PC-3 (cell line): ENCODE measurements at regions of chr17 and their contacts with region 1.

Region 1: GRCh38 chr17:75855310-75856081 is at the start of gene WBP2:
- DNase-seq: peak; percentile 100
- ATAC-seq: peak; percentile 90
- H3K4me3 ChIP-seq: peak within 1 kb of the TSS; percentile 86
- H3K27ac ChIP-seq: peak within 1 kb of the TSS; percentile 69
- H3K4me1 ChIP-seq: peaks cover 28% of the 10 kb centered on the region
- H3K27me3 ChIP-seq: no peaks in the 10 kb centered on the region
- CTCF ChIP-seq: peak; percentile 51
- total RNA-seq, gene WBP2: 49.7 and 51.8 TPM in 2 replicates

Region 2: DNA sequence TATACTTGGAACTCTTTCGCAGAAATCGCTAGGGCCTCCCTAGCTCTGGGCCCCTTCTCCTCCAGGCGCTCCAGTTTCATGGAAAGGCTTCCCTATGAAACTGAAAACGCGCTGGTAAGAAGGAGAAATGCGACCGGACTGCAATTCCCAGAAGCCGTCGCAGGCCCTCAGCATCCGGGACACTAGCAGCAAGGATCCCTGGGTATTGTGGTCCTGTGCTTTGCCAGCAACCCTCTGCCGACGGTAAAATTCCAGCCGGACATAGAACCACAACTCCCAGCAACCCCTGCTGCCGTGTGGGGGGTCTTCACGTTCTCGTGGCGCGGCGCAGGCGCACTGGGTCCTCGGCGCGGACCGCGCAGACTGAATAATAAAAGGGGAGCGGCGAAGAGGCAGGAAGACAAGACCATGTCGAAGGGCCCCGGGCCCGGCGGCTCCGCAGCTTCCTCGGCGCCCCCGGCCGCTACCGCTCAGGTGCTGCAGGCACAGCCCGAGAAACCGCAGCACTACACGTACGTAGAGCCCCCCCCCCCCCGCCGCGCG is 71.0 kb before region 1 on chr17 and contains the start of gene UNK:
- CTCF ChIA-PET with region 1: interaction called, 5 read pairs
- POLR2A ChIA-PET with region 1: interaction called, 16 read pairs
- intact Hi-C with region 1: loop called (anchors 2 kb)
- DNase-seq: peak; percentile 99
- ATAC-seq: peak; percentile 71
- H3K4me3 ChIP-seq: peak within 1 kb of the TSS; percentile 68
- H3K27ac ChIP-seq: peak within 1 kb of the TSS; percentile 93
- H3K4me1 ChIP-seq: peaks cover 49% of the 10 kb centered on the region
- H3K27me3 ChIP-seq: no peaks in the 10 kb centered on the region
- CTCF ChIP-seq: no peak
- total RNA-seq, gene UNK: 21.8 and 22.9 TPM in 2 replicates

Region 3: GRCh38 chr17:75799398-75799797 is 56.1 kb before region 1 on chr17:
- CTCF ChIA-PET with region 1: no interaction called
- POLR2A ChIA-PET with region 1: no interaction called
- intact Hi-C with region 1: no loop called
- DNase-seq: no peak
- ATAC-seq: no peak
- H3K4me3 ChIP-seq: no peak overlapping the region
- H3K27ac ChIP-seq: no peak overlapping the region
- H3K4me1 ChIP-seq: no peaks in the 10 kb centered on the region
- H3K27me3 ChIP-seq: no peaks in the 10 kb centered on the region
- CTCF ChIP-seq: no peak

Region 4: DNA sequence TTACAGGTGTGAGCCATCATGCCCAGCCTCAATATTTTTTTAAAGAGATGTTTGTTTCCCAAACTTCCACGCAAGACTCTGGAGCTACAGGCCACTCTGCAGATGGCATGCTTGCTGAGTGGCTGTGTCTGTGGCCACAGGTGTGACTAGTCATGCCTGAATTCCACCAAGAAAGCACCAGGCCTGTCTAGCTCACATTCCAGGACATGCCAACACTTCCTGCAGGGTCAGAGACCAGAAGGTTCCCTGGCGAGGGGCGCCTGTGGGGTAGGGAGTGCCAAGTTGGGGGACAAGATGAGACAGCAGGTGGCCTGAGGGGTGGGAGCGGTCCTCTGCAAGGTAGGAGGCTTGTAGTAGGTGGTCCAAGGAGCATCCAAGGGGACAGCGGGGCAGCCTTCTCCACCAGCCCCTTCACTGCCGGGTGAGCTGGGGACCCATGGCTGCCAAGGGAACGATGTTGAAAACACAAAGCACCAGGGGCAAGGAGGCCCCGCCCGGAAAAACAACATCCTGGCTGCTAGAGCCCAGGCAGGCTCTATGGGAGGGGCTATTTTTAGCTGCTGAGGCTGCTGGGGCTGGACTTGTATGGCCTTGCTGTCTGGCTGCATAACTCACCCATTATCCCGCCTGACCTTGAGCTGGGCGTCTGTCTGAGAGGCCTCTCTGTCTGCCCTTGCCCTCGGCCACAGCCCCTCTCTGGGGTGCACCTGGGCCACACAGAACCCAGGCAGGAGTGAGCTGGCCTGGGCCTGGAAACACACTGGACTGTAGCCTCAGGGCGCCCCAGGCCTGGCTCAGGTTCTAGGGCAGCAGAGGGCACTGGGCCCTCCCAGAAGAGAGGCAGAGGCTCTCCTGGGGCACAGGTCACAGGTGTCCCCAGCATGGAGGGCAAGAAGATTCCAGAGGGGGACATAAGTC is 17.2 kb after region 1 on chr17:
- CTCF ChIA-PET with region 1: interaction called, 30 read pairs
- POLR2A ChIA-PET with region 1: interaction called, 29 read pairs
- intact Hi-C with region 1: loop called (anchors 1 kb)
- DNase-seq: peak; percentile 80
- ATAC-seq: peak; percentile 16
- H3K4me3 ChIP-seq: no peak overlapping the region
- H3K27ac ChIP-seq: peak overlapping the region; percentile 62
- H3K4me1 ChIP-seq: peaks cover 36% of the 10 kb centered on the region
- H3K27me3 ChIP-seq: no peaks in the 10 kb centered on the region
- CTCF ChIP-seq: no peak

Region 5: DNA sequence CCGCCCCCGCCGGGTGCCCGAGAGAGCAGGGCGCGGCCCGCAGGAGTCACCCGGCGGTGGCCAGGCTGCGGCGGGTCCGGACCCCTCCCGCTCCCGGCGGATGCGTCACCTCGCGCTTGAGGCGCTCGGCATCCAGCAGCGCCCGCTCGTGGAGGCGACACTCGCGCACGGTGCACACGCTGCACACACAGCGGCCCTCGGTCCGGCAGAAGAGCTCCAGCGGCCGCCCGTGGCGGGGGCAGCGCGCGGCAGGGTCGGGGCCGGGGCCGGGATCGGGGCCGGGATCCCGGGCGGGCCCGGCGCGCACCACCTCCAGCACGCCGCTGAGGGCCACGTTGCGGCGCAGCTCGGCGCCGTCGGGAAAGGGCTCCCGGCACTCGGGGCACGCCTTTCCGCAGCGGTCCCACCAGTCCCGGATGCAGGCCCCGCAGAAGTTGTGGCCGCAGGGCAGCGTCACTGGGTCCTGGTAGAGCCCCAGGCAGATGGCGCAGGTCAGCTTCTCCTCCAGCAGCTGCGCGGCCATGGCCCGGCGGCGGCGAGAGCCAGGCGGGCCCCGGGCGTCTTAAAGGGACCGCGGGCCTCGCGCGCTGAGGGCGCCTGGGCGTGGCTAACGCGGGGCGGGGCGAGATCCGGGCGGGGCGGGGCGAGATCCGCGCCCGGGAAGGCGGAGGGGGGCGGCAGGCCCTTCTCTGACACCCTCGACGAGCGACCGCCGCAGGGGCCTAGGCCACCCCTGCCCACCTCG is 41.1 kb after region 1 on chr17 and contains the start of gene TRIM65:
- CTCF ChIA-PET with region 1: interaction called, 8 read pairs
- POLR2A ChIA-PET with region 1: interaction called, 3 read pairs
- intact Hi-C with region 1: loop called (anchors 2 kb)
- DNase-seq: peak; percentile 91
- ATAC-seq: peak; percentile 87
- H3K4me3 ChIP-seq: peak within 1 kb of the TSS; percentile 83
- H3K27ac ChIP-seq: peak within 1 kb of the TSS; percentile 74
- H3K4me1 ChIP-seq: peaks cover 14% of the 10 kb centered on the region
- H3K27me3 ChIP-seq: no peaks in the 10 kb centered on the region
- CTCF ChIP-seq: peak; percentile 40
- total RNA-seq, gene TRIM65: 32.3 and 48.9 TPM in 2 replicates

Region 6: DNA sequence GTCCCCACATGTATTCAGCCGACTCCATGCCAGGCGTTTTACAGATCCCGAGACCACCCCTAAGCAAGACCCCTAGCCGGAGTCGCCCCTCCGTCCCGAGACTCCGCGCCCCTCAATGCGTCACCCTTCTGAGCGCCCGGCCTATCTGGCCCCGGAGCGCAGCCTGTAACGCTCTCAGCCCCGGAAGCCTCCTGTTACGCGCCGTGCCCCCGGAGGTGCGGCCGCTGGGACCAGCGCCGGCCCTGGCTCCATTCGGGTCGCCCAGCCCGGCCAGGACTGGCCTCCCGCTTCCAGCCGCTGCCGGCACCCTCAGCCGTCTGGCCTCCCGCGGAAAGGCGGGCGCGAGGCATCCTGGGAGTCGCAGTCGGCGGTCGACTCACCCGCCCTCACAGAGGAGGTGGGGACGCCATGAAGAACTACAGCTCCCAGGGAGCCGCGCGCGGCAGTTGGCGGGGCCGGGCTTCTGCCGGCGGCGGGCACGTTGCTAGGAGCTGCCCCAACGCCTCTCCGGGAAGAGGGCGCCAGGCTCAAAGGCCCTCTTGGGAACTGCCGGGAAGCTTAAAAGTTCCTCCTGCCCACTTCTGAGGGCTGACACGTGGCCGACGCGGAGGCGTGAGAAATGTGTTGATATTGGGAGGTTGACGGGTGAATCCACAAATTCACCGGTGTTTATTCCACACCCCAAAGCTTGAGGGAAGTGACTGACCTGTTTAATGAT is 85.4 kb after region 1 on chr17 and contains the start of gene FBF1:
- CTCF ChIA-PET with region 1: no interaction called
- POLR2A ChIA-PET with region 1: interaction called, 22 read pairs
- intact Hi-C with region 1: no loop called
- DNase-seq: peak; percentile 98
- ATAC-seq: peak; percentile 99
- H3K4me3 ChIP-seq: peak within 1 kb of the TSS; percentile 88
- H3K27ac ChIP-seq: peak within 1 kb of the TSS; percentile 12; the same call in 1 of the 2 replicates
- H3K4me1 ChIP-seq: peaks cover 11% of the 10 kb centered on the region; the same call in 1 of the 2 replicates
- H3K27me3 ChIP-seq: no peaks in the 10 kb centered on the region
- CTCF ChIP-seq: peak; percentile 24; the same call in 1 of the 2 replicates
- total RNA-seq, gene FBF1: 35.3 and 39.2 TPM in 2 replicates